BJ (cell line): ENCODE measurements at regions of chr1 and their contacts with region 1.

Region 1: GRCh38 chr1:100657876-100658715 is 61.4 kb upstream of the VCAM1 start:
- DNase-seq: no peak
- H3K4me3 ChIP-seq: no peak overlapping the region
- H3K27me3 ChIP-seq: peaks cover 2% of the 10 kb centered on the region
- CTCF ChIP-seq: no peak

Region 2: DNA sequence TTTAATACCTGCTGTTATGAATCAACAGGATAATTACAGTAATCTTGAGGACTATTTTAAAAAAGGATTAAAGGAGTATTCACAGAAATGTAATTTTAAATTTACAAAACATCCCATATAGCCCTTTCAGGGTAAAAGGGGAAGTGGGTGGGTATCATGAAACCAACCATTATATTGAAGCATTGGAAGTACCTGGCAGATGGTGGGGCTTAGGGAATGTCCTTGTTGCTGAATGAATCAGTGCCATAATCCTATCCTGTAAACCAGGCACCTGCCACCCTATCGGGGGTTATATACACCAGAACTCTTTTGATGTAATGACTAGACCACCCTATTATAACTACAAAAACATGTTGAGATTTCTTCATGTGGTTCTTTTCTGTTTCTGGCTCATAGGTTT is 275.4 kb before region 1 on chr1:
- CTCF ChIA-PET with region 1: no interaction called
- POLR2A ChIA-PET with region 1: interaction called, 13 read pairs
- DNase-seq: no peak
- H3K4me3 ChIP-seq: no peak overlapping the region
- H3K27me3 ChIP-seq: no peaks in the 10 kb centered on the region
- CTCF ChIP-seq: no peak

Region 3: DNA sequence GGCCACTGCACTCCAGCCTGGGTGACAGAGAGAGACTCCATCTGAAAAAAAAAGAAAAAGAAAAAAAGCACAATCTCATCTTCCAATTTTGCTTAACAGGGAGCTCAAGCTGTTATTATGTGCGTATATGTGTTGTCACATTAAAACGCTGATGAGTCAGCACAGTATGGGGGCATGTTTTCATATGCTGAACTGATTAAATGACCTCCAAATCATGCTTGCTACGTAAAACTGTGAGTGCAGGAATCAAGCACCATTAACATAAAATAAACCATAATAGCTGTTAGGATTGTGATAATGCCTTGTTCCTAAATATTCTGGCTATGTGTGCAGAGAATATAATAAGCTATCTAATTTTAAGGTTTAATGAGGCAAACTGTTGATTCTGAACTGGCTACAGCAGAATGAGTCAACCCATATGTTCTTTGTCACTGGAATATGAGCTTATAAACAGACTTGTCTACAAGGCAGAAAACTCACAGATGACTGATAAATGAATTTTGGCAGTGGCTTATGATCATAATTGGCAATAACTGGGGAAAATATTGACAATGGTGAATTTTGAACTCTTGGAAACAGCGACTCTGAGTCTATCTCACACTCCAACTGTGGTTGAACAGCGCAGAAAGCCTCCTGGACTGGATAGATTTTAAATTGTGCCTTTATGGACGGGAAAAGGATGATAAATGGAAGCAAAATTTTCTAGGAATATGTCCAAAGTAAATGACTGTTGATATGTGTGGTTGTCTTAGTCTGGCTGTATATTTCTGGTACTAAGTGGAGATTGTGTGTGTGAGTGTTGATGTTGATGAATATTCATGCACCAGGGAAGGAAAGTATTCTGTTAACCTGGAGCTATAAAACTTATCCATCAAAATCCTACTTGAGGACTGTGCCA is 136.9 kb after region 1 on chr1:
- CTCF ChIA-PET with region 1: no interaction called
- POLR2A ChIA-PET with region 1: no interaction called
- DNase-seq: no peak
- H3K4me3 ChIP-seq: no peak overlapping the region
- H3K27me3 ChIP-seq: peaks cover 3% of the 10 kb centered on the region; the same call in 1 of the 2 replicates
- CTCF ChIP-seq: no peak